Activated CD8-positive, alpha-beta T cell treated with anti-CD3 and anti-CD28 coated beads for 36 hours (primary cell): ENCODE measurements at regions of chr1 and their contacts with region 1.

Region 1: DNA sequence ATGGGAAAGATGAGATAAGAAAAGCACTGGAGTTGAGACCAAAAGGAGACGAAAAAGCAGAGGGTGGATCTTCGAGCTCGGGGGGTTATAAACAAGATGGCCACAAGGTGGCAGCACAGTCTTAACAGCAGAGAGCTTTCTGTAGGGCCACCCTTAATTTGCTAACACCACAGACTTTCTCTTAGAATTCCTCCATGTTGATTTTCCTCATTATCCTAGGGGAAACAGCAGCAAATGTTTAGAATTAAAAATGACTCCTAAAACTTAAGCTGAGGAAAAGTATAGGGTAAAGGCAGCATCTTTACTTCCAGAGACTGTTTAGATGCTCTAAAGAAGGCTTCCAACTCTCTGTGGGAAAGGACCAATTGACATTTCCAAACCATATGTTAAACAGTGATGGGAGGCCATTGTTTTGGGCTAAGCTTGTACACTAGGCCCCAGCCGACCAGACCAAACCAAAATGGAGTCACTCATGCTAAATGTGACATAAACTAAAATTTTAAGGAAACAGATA is 2.5 kb upstream of the APOBEC4 start:
- DNase-seq: peak; percentile 87
- ATAC-seq: no peak
- H3K4me3 Mint-ChIP-seq: no peak overlapping the region
- H3K27ac Mint-ChIP-seq: no peak overlapping the region
- H3K4me1 Mint-ChIP-seq: peaks cover 30% of the 10 kb centered on the region
- H3K27me3 Mint-ChIP-seq: no peaks in the 10 kb centered on the region
- CTCF ChIP-seq: peak; percentile 93

Region 2: DNA sequence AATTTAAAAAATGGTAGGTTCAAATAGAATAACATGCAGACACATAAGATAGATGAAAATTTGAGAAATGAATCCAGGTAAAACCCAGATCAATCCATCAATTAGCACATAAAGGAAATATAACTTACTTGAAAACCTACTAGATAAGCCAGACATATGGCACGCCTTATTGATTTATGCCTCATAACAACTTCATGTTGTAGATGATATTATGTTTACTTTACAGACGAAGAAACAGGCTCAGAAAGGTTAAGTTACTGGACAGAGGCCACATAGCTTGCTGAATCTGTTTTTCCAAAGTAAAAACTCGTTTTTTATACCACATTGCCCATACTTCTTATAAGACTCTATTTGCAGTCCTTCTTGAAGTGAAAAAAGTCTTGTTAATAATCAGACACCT is 43.2 kb before region 1 on chr1:
- CTCF ChIA-PET with region 1: no interaction called
- POLR2A ChIA-PET with region 1: no interaction called
- intact Hi-C with region 1: no loop called
- DNase-seq: no peak
- ATAC-seq: no peak
- H3K4me3 Mint-ChIP-seq: no peak overlapping the region
- H3K27ac Mint-ChIP-seq: no peak overlapping the region
- H3K4me1 Mint-ChIP-seq: peaks cover 11% of the 10 kb centered on the region
- H3K27me3 Mint-ChIP-seq: no peaks in the 10 kb centered on the region
- CTCF ChIP-seq: no peak

Region 3: GRCh38 chr1:183670178-183670577 is 14.6 kb after region 1 on chr1:
- CTCF ChIA-PET with region 1: interaction called, 34 read pairs
- POLR2A ChIA-PET with region 1: no interaction called
- intact Hi-C with region 1: no loop called
- DNase-seq: no peak
- ATAC-seq: no peak
- H3K4me3 Mint-ChIP-seq: no peak overlapping the region
- H3K27ac Mint-ChIP-seq: no peak overlapping the region
- H3K4me1 Mint-ChIP-seq: no peaks in the 10 kb centered on the region
- H3K27me3 Mint-ChIP-seq: peaks cover 1% of the 10 kb centered on the region
- CTCF ChIP-seq: no peak

Region 4: GRCh38 chr1:183685112-183685713 is 29.6 kb after region 1 on chr1:
- CTCF ChIA-PET with region 1: interaction called, 110 read pairs
- POLR2A ChIA-PET with region 1: no interaction called
- intact Hi-C with region 1: loop called (anchors 2 kb)
- DNase-seq: peak; percentile 45
- ATAC-seq: peak; percentile 74
- H3K4me3 Mint-ChIP-seq: no peak overlapping the region
- H3K27ac Mint-ChIP-seq: no peak overlapping the region
- H3K4me1 Mint-ChIP-seq: peaks cover 10% of the 10 kb centered on the region
- H3K27me3 Mint-ChIP-seq: peaks cover 6% of the 10 kb centered on the region
- CTCF ChIP-seq: peak; percentile 78

Region 5: GRCh38 chr1:183742355-183742754 is 86.7 kb after region 1 on chr1:
- CTCF ChIA-PET with region 1: no interaction called
- POLR2A ChIA-PET with region 1: no interaction called
- intact Hi-C with region 1: no loop called
- DNase-seq: no peak
- ATAC-seq: no peak
- H3K4me3 Mint-ChIP-seq: no peak overlapping the region
- H3K27ac Mint-ChIP-seq: no peak overlapping the region
- H3K4me1 Mint-ChIP-seq: no peaks in the 10 kb centered on the region
- H3K27me3 Mint-ChIP-seq: no peaks in the 10 kb centered on the region
- CTCF ChIP-seq: no peak

Region 6: GRCh38 chr1:183783767-183784637 is 128.4 kb after region 1 on chr1:
- CTCF ChIA-PET with region 1: no interaction called
- POLR2A ChIA-PET with region 1: no interaction called
- intact Hi-C with region 1: no loop called
- DNase-seq: no peak
- ATAC-seq: no peak
- H3K4me3 Mint-ChIP-seq: no peak overlapping the region
- H3K27ac Mint-ChIP-seq: no peak overlapping the region
- H3K4me1 Mint-ChIP-seq: no peaks in the 10 kb centered on the region
- H3K27me3 Mint-ChIP-seq: no peaks in the 10 kb centered on the region
- CTCF ChIP-seq: no peak

Region 7: DNA sequence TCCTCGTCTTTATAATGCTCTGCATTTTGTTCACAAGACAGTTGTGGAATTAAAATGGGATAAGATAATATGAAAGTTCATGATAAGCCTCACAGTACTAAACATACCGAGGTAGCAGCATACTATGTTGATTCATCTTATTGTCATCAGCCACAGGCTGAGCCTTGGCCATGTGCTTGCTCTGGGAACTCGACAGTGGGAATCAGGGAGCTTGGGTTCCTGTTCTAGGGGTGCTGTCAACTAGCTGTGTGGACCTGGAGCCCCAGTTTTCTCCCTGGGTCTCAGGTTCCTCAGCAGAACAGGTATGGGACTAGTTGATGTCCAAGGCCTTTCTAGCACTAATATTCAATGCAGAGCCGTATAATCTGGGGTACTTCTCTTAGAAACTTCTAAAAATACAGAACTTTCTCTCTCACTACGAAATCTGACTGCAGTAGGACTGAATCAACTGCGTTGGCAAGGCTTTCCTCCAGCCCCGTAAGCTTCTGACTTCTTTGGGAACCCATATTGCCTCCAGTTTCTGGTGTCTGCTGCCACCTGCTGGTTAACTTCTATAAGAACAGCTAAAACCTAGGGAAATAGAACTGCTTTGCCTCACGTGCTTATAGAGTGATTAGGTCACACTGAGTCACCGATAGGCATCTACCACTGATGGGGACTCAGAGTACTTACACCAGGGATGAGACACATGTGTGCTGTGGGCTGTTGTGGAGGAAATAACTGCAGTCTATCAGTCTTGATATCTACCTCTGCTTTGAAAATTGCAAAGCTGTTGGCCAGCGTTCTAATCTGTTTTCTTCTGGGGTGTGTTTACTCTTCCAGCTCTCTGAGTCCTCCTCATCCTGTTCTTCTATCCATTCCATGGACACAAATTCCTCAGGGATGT is 260.2 kb after region 1 on chr1:
- CTCF ChIA-PET with region 1: interaction called, 117 read pairs
- POLR2A ChIA-PET with region 1: interaction called, 3 read pairs
- intact Hi-C with region 1: loop called (anchors 1 kb)
- DNase-seq: peak; percentile 79
- ATAC-seq: peak; percentile 99
- H3K4me3 Mint-ChIP-seq: no peak overlapping the region
- H3K27ac Mint-ChIP-seq: no peak overlapping the region
- H3K4me1 Mint-ChIP-seq: peaks cover 24% of the 10 kb centered on the region
- H3K27me3 Mint-ChIP-seq: no peaks in the 10 kb centered on the region
- CTCF ChIP-seq: peak; percentile 80

Region 8: GRCh38 chr1:184222652-184223052 is 567.0 kb after region 1 on chr1:
- CTCF ChIA-PET with region 1: no interaction called
- POLR2A ChIA-PET with region 1: no interaction called
- intact Hi-C with region 1: loop called (anchors 10 kb)
- DNase-seq: peak; percentile 37
- ATAC-seq: peak; percentile 42
- H3K4me3 Mint-ChIP-seq: no peak overlapping the region
- H3K27ac Mint-ChIP-seq: no peak overlapping the region
- H3K4me1 Mint-ChIP-seq: no peaks in the 10 kb centered on the region
- H3K27me3 Mint-ChIP-seq: peaks cover 4% of the 10 kb centered on the region
- CTCF ChIP-seq: peak; percentile 97